Heart right ventricle (tissue), 16 donors: ENCODE measurements at regions of chr11 and their contacts with region 1.

Region 1: DNA sequence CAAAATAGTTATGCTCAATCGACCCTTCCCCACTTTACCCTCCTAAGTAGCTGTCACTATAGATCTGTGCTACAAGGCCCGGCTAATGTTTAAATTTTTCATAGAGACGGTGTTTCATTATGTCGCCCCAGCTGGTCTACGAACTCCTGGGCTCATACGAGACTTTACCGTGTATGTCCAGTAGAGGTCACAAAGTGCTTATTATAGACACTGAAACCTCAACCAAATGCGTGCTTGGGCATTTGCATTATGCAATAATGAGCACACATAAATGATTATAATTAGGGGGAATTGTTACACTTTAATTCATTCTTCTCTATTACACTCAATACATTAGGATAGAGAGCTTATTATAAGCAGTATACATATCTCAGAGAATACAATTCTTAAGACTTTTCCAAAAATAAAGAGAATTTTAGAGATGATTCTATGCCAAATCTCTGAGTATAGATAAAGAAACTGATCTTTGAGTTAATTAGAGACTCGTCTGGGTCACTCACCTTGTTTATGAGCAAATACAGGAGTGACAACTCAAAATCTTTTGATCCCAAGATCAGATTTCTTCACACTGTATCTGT is 12.5 kb upstream of the MRPL16 start:
- DNase-seq: peak in 1 of 2 donors; percentile 52
- ATAC-seq: peak in 6 of 8 donors; percentile 72 to 86 (median 74)
- H3K4me3 ChIP-seq: no peak overlapping the region
- H3K27ac ChIP-seq: no peak overlapping the region
- H3K4me1 ChIP-seq: peaks cover 0 to 6% (median 0%) of the 10 kb centered on the region in 9 donors
- H3K27me3 ChIP-seq: no peaks in the 10 kb centered on the region
- CTCF ChIP-seq: peak; percentile 26 to 79 (median 63)

Region 2: DNA sequence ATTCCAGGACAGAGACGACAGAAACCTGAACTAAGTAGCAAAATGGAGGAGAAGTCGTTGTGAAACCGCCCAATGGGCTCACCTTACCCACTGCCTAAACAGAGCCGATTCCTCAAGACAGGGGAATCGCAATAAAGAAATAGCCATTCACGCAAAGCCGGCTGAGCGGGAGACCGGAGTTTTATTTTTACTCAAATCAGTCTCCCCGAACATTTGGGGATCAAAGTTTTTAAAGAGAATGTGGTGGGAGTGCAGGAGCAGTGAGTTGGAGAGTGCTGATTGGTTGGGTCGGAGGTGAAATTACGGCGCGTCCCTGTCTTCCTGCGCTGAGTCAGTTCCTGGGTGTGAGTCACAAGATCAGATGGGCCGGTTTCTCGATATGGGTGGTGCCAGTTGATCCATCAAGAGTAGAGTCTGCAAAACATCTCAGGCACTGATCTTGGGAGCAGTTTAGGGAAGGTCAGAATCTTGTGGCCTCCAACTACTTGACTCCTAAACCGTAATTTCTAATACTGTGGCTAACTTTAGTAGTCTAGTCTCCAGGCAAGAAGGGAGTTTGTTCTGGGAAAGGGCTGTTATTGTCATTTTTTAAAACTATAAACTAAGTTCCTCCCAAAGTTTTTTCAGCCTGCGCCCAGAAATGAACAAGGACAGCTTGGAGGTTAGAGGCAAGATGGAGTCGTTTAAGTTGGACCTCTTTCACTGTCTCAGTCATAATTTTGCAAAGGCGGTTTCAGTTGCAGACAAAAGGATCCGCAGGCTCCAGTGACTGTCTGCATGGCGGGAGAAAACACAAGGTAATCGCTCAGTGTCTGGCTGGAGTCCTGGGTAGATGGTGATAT is 277.7 kb before region 1 on chr11:
- intact Hi-C with region 1: no loop called
- DNase-seq: no peak
- ATAC-seq: no peak
- H3K4me3 ChIP-seq: no peak overlapping the region
- H3K27ac ChIP-seq: peak overlapping the region in 1 of 10 donors; percentile 8
- H3K4me1 ChIP-seq: peaks cover 0 to 23% (median 8%) of the 10 kb centered on the region in 9 donors
- H3K27me3 ChIP-seq: no peaks in the 10 kb centered on the region
- CTCF ChIP-seq: no peak

Region 3: DNA sequence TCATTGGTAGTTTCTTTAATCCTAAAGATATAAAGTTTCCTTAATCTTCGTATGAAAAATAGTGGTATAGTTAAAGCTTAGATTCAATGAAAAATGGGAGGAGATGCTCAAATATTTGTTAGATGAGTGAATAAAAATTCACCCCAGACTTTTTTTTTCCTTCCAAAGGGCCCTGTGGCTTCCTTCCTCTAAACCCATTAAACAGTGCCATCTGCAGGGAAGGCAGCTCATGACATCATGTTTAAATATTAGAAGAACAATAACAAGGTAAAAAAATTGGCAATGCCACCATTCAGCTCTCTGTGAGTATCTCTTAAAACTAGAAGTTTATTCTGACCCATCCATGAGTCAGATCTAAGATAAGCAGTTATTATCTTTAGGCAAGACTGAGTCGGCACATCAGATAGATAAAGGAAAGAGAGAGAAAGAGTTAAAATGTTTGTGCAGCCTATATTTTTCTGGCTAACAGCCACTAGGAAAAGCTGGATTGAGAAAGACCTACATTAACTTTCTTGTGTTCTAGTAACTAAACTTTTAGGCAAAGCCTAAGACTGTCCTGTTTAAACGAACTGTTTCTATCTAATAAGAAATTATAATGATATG is 96.0 kb after region 1 on chr11:
- intact Hi-C with region 1: loop called in 2 of 10 experiments (anchors 2 to 10 kb)
- DNase-seq: no peak
- ATAC-seq: no peak
- H3K4me3 ChIP-seq: no peak overlapping the region
- H3K27ac ChIP-seq: no peak overlapping the region
- H3K4me1 ChIP-seq: no peaks in the 10 kb centered on the region
- H3K27me3 ChIP-seq: no peaks in the 10 kb centered on the region
- CTCF ChIP-seq: peak in 6 of 9 donors; percentile 31 to 49 (median 35)

Region 4: DNA sequence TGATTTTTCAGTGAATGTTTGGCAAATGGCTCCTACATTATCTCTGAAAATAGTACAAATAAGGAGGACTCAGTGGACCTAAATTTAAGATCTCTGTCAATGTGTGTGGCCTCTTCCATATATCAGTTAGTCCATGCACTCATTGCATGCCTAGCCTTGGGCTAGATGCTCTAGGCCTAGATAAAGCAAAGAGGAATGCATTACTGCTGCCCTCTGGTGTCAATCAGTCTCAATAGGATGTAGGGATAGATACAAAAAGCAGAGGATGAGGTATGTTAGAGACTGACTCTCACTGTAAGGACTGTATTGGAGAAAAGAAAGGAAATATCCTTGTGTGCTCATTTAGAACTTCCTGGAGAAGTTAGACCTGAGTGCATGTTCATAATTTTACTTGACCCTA is 307.4 kb after region 1 on chr11:
- intact Hi-C with region 1: loop called in 7 of 10 experiments (anchors 1 to 10 kb)
- DNase-seq: peak in 1 of 2 donors; percentile 8
- ATAC-seq: peak in 4 of 8 donors; percentile 38 to 62 (median 50)
- H3K4me3 ChIP-seq: no peak overlapping the region
- H3K27ac ChIP-seq: no peak overlapping the region
- H3K4me1 ChIP-seq: no peaks in the 10 kb centered on the region
- H3K27me3 ChIP-seq: no peaks in the 10 kb centered on the region
- CTCF ChIP-seq: peak in 7 of 9 donors; percentile 29 to 49 (median 33)

Region 5: DNA sequence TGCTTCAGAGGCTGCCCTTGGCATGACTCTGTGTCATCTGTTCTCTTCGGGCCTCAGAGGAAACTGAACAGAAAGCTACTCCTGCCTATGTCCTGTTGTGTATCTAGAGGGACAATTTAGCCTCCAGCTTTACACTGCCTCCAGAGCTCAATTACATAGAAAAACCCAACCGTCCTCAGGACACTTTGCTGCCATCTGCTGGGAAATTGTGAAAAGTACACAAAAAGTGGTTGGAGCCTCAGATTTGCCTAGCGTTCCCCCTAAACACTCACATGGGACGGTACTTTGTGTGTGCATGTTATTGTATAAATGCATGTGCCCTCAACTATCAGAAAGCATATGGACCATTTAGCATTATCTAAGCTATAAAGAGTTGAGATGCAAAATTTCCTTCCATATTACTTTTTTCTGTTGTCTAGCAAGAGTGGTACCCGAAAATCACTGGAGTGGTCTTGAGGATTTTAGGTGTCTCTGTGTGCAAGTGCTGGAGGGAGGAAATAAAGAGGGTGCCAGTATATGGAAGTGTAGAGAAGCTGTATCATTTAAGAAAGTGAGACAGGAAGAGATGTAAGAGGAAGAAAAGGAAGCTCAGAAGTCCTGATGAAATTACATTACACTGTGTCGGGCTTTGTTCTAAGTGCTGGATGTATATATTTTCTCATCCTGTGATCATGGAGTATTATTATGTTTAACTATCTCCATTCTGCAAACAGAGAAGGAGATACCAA is 428.6 kb after region 1 on chr11:
- intact Hi-C with region 1: loop called in 4 of 10 experiments (anchors 5 kb)
- DNase-seq: peak in 1 of 2 donors; percentile 9
- ATAC-seq: peak in 4 of 8 donors; percentile 33 to 81 (median 67)
- H3K4me3 ChIP-seq: no peak overlapping the region
- H3K27ac ChIP-seq: peak overlapping the region in 2 of 10 donors; percentile 2 to 51
- H3K4me1 ChIP-seq: peaks cover 0 to 27% (median 0%) of the 10 kb centered on the region in 9 donors
- H3K27me3 ChIP-seq: peaks cover 0 to 7% (median 0%) of the 10 kb centered on the region in 7 donors
- CTCF ChIP-seq: peak in 6 of 9 donors; percentile 46 to 73 (median 58)